ENCODE measurements at regions of chr12 and their contacts with region 1.

Region 1: GRCh38 chr12:47651368-47652254 is 54.2 kb downstream of the RPAP3 start:
- DNase-seq: no peak
- H3K4me3 ChIP-seq: peak overlapping the region in 1 of 4 donors; percentile 6
- H3K27ac ChIP-seq: no peak overlapping the region
- H3K4me1 ChIP-seq: peaks cover 0 to 17% (median 17%) of the 10 kb centered on the region in 4 donors
- H3K27me3 ChIP-seq: no peaks in the 10 kb centered on the region
- CTCF ChIP-seq: peak; percentile 77 to 86 (median 85)
- EP300 ChIP-seq: no peak
- POLR2A ChIP-seq: no peak

Region 2: DNA sequence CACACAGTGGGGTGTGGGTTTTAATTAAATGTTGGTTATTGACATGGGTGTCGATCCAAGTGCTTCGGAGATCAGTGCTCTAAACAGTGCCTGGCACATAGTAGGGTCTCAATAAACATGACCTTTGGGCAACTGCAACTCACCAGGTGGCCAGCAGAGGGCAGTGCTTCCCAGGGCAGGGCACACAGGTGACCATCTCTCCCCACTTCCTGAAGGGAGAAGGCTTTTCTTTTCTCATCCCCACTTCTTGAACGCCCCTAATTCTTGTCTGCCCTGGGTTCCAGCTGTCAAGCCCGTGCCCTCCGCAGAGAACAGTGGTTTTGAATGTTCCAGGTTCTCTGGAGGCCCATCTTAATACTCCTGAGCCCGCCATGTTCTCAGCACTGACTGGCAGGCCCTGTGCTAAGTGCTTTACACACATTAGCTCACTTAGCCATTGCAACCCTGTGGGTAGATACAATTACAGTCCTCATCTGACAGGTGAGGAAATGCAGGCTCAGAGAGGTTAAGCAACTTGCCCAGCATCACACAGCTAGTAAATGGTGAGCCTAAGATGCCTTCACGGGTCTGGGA is 90.7 kb after region 1 on chr12:
- intact Hi-C with region 1: no loop called
- DNase-seq: no peak
- H3K4me3 ChIP-seq: no peak overlapping the region
- H3K27ac ChIP-seq: no peak overlapping the region
- H3K4me1 ChIP-seq: peaks cover 39 to 48% (median 46%) of the 10 kb centered on the region in 4 donors
- H3K27me3 ChIP-seq: no peaks in the 10 kb centered on the region
- CTCF ChIP-seq: peak; percentile 94 to 100 (median 98)
- EP300 ChIP-seq: no peak
- POLR2A ChIP-seq: no peak

Region 3: GRCh38 chr12:47844274-47845019 is 192.8 kb after region 1 on chr12:
- intact Hi-C with region 1: loop called (anchors 5 kb)
- DNase-seq: no peak
- H3K4me3 ChIP-seq: no peak overlapping the region
- H3K27ac ChIP-seq: no peak overlapping the region
- H3K4me1 ChIP-seq: peaks cover 0 to 12% (median 9%) of the 10 kb centered on the region in 4 donors
- H3K27me3 ChIP-seq: peaks cover 0 to 14% (median 0%) of the 10 kb centered on the region in 4 donors
- CTCF ChIP-seq: no peak
- EP300 ChIP-seq: no peak
- POLR2A ChIP-seq: no peak